ENCODE measurements at regions of chr11 and their contacts with region 1.

Region 1: GRCh38 chr11:88535916-88536547 is 198.5 kb upstream of the CTSC start:
- DNase-seq: peak; percentile 40 to 64
- ATAC-seq: peak; percentile 95
- H3K4me3 ChIP-seq: no peak overlapping the region
- H3K27ac ChIP-seq: peak overlapping the region; percentile 65 to 72
- H3K4me1 ChIP-seq: peaks cover 38% of the 10 kb centered on the region
- CTCF ChIP-seq: no peak
- EP300 ChIP-seq: no peak
- POLR2A ChIP-seq: no peak
- RAD21 ChIP-seq: no peak

Region 2: GRCh38 chr11:88103337-88104206 is 432.5 kb before region 1 on chr11:
- CTCF ChIA-PET with region 1: interaction called, 18 read pairs
- POLR2A ChIA-PET with region 1: interaction called, 4 read pairs
- DNase-seq: peak; percentile 58 to 95
- ATAC-seq: peak; percentile 96 to 99
- H3K4me3 ChIP-seq: peak overlapping the region; percentile 21
- H3K27ac ChIP-seq: peak overlapping the region; percentile 79 to 87
- H3K4me1 ChIP-seq: peaks cover 41% of the 10 kb centered on the region
- CTCF ChIP-seq: peak; percentile 89
- EP300 ChIP-seq: no peak
- POLR2A ChIP-seq: no peak
- RAD21 ChIP-seq: peak; percentile 70 to 77

Region 3: DNA sequence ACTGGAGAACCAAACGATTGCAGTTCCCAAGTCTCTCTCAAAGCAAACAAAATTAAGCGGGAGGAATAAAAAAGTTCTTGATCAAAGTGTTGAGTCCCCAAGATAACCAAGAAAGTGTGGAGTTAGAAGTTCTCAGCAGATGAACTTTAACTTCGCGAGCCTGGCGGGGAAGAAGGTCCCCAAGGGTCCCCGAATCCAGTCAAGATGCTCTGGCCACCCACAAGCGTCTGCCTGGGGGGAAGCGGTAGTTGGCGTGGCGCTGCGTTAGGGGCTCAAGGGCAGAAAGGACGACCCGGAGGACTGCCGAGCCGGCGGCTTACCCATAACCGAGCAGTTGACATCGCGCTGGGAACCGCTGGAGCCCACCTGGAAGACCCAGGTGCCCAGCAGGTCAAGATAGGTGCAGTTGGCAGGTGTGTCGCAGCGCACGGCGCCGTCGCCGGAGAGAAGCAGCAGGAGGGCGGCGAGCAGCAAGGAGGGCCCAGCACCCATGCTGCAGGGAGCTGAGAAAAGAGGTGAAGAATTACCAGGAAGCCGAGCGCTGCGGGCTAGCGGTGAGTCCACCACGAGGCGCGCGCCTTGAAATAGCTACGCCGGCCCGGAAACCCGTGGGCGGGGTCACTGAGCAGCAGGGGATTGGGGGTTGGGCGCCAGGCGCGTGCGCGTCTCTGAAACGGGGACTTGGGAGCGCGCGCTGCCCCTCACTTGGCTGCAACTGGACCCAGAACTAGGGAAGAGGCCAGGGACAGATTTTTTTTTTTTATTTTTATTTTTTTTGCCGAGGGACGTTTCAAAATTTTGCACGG is 198.6 kb before region 1 on chr11 and contains the start of gene CTSC:
- CTCF ChIA-PET with region 1: no interaction called
- POLR2A ChIA-PET with region 1: interaction called, 13 read pairs
- DNase-seq: peak; percentile 77 to 87
- ATAC-seq: peak; percentile 97 to 98
- H3K4me3 ChIP-seq: peak within 1 kb of the TSS; percentile 71
- H3K27ac ChIP-seq: peak within 1 kb of the TSS; percentile 89 to 94
- H3K4me1 ChIP-seq: peaks cover 11% of the 10 kb centered on the region; the same call in 2 of the 3 replicates
- CTCF ChIP-seq: no peak
- EP300 ChIP-seq: no peak
- POLR2A ChIP-seq: peak; percentile 73
- RAD21 ChIP-seq: peak; percentile 4 to 27; a peak in 1 of 5 replicates
- polyA plus RNA-seq, gene CTSC: 118 and 123 TPM in 2 replicates

Measured in A549 (cell line).